ENCODE measurements at regions of chr17 and their contacts with region 1.

Region 1: DNA sequence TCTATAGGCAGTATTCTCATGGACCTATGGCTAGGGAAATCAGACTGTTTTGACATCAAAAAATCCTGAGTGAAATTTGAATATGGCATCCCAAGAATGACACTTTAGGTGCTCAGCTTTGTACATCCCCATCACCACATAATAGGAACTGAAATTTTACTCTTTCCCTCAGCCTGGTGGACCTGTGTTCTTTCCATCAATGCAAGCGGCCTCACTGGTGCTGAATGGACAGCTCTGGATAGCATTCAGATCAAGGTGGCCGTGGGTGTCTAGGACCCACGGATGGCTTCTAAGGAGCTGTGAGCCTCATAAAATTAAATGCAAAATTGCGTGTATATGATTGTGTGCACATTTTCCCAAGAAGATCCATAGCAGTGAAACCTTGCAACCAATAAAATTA is 152.6 kb downstream of the MAP2K6 start:
- DNase-seq: no peak
- H3K4me3 ChIP-seq: no peak overlapping the region
- H3K27ac ChIP-seq: no peak overlapping the region
- H3K4me1 ChIP-seq: peaks cover 0 to 5% (median 0%) of the 10 kb centered on the region in 4 donors
- H3K27me3 ChIP-seq: no peaks in the 10 kb centered on the region
- CTCF ChIP-seq: no peak
- EP300 ChIP-seq: no peak
- POLR2A ChIP-seq: no peak

Region 2: DNA sequence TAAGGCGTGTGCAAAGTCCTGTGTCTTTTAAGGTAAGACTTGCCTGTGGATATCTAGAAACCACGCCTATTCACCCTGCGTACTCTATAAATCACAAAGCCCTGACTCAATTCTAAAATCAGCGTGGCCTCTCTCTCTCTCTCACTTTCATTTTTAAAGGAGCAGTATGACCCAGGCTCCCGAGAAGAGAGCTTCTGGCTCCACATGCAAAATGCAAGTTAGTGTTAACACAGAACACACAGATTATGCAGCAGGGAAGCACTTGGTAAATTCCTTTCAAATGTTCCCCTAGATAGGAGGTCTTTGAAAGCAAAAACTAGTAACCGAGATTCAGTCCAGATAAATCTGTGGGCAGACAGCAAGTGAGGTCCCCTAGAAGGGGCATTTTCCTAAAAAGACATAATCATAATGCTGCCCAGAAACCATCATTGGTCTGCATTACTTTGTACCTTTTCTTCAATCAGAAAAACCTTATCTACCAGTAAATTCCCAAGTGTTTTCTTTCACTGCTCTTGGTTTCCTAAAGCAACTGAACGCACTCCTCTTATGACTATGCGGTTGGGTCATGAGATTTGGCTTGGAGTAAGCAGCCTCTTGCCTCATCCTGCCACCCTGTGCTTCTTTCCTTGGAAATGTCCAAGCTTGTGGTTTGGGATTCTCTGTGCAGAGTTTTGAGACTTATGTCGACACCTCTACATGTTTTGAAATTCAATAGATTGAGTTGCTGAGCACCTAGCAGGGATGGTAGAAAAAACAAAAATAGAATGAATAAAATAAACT is 570.5 kb after region 1 on chr17:
- intact Hi-C with region 1: loop called (anchors 2 kb)
- DNase-seq: peak; percentile 86
- H3K4me3 ChIP-seq: peak overlapping the region; percentile 10 to 43 (median 36)
- H3K27ac ChIP-seq: peak overlapping the region; percentile 69 to 89 (median 83)
- H3K4me1 ChIP-seq: peaks cover 0 to 22% (median 5%) of the 10 kb centered on the region in 4 donors
- H3K27me3 ChIP-seq: no peaks in the 10 kb centered on the region
- CTCF ChIP-seq: no peak
- EP300 ChIP-seq: no peak
- POLR2A ChIP-seq: no peak

Measured in sigmoid colon (tissue), 7 donors.